Activated T-helper 2 cell treated with anti-CD3 and anti-CD28 coated beads, Interferon-gamma antibody, Interleukin-2, Interleukin-4, amounts not matched to agents 10 μg/mL and 5 μg/mL and 100 μg/mL, durations not matched to agents 14 hours and 24 hours and 36 hours (primary cell): ENCODE measurements at regions of chr7 and their contacts with region 1.

Region 1: GRCh38 chr7:2709553-2710285 is 21.7 kb downstream of the AMZ1 start:
- DNase-seq: peak; percentile 77
- H3K4me3 Mint-ChIP-seq: peak overlapping the region; percentile 26
- H3K27ac Mint-ChIP-seq: no peak overlapping the region
- H3K4me1 Mint-ChIP-seq: peaks cover 34% of the 10 kb centered on the region
- H3K27me3 Mint-ChIP-seq: peaks cover 4% of the 10 kb centered on the region

Region 2: GRCh38 chr7:2477447-2478398 is 232.0 kb before region 1 on chr7:
- intact Hi-C with region 1: loop called (anchors 2 kb)
- DNase-seq: peak; percentile 57
- H3K4me3 Mint-ChIP-seq: no peak overlapping the region
- H3K27ac Mint-ChIP-seq: no peak overlapping the region
- H3K4me1 Mint-ChIP-seq: peaks cover 2% of the 10 kb centered on the region
- H3K27me3 Mint-ChIP-seq: peaks cover 3% of the 10 kb centered on the region

Region 3: DNA sequence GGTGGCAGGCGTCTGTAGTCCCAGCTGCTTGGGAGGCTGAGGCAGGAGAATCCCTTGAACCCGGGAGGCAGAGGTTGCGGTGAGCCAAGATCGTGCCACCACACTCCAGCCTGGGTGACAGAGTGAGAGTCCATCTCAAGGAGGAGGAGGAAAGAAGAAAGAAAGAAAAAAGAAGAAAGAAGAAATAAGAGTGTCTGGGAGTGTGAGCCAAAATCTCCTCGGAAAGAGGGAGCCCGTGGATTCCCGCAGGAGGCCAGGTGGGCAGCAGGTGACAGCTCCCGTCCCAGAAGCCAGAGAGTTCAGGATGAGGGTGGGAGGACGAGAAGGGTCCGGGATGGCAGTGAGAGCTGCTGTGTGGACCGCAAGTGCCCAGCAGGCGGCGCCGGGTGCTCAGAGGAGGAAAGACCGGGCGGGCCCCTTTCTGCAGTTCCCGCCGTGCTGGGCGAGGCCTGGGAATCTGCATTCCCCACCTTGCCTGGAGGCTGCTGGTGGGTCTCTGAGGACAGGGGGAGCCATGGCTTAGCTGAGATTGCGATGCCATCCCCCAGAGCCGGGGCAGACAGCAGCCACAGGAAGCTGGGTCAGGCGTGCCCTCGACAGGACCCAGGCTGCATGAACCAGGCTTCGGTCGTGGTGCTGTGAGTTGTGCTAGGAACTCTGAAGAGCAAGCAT is 38.9 kb before region 1 on chr7:
- intact Hi-C with region 1: loop called (anchors 1 kb)
- DNase-seq: peak; percentile 56
- H3K4me3 Mint-ChIP-seq: no peak overlapping the region
- H3K27ac Mint-ChIP-seq: no peak overlapping the region
- H3K4me1 Mint-ChIP-seq: peaks cover 3% of the 10 kb centered on the region
- H3K27me3 Mint-ChIP-seq: peaks cover 31% of the 10 kb centered on the region

Region 4: GRCh38 chr7:2698581-2699288 is 11.0 kb before region 1 on chr7:
- intact Hi-C with region 1: loop called (anchors 1 kb)
- DNase-seq: peak; percentile 79
- H3K4me3 Mint-ChIP-seq: peak overlapping the region; percentile 22
- H3K27ac Mint-ChIP-seq: peak overlapping the region; percentile 75
- H3K4me1 Mint-ChIP-seq: peaks cover 32% of the 10 kb centered on the region
- H3K27me3 Mint-ChIP-seq: peaks cover 4% of the 10 kb centered on the region

Region 5: DNA sequence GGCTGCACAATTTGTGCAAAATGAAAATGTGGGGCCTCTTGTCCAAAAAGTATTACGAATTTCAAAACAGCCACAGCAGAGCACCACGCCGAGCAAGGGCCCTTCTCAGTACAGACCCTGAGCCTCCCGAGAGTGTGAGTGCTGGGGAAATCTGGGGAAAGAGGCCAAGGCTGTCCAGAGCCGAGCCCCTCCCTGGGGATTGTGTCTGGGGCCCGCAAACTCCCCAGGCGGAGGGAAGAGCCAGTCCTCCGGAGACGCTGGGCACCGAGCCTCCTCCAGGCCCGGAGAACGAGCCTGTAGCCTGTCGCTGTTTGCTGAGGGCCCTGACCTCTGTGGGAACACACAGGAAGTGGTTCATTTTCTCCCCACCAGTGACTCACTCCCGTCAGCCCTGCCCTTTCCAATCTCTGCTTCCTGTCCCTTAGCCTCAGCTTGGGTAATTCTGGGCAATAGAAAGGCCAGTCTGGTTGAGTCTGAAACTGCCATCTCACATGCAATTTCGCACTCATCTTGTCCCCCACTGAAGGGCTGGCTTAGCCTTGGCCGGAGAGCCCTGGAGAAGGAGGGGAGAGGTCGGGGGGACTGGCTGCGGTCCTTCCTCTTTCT is 153.8 kb after region 1 on chr7:
- intact Hi-C with region 1: no loop called
- DNase-seq: peak; percentile 71
- H3K4me3 Mint-ChIP-seq: peak overlapping the region; percentile 68
- H3K27ac Mint-ChIP-seq: peak overlapping the region; percentile 94
- H3K4me1 Mint-ChIP-seq: peaks cover 23% of the 10 kb centered on the region
- H3K27me3 Mint-ChIP-seq: no peaks in the 10 kb centered on the region

Region 6: GRCh38 chr7:4052130-4052529 is 1342.4 kb after region 1 on chr7:
- intact Hi-C with region 1: no loop called
- DNase-seq: no peak
- H3K4me3 Mint-ChIP-seq: no peak overlapping the region
- H3K27ac Mint-ChIP-seq: no peak overlapping the region
- H3K4me1 Mint-ChIP-seq: no peaks in the 10 kb centered on the region
- H3K27me3 Mint-ChIP-seq: no peaks in the 10 kb centered on the region